Thyroid gland (tissue), 4 donors: ENCODE measurements at regions of chr17 and their contacts with region 1.

Region 1: DNA sequence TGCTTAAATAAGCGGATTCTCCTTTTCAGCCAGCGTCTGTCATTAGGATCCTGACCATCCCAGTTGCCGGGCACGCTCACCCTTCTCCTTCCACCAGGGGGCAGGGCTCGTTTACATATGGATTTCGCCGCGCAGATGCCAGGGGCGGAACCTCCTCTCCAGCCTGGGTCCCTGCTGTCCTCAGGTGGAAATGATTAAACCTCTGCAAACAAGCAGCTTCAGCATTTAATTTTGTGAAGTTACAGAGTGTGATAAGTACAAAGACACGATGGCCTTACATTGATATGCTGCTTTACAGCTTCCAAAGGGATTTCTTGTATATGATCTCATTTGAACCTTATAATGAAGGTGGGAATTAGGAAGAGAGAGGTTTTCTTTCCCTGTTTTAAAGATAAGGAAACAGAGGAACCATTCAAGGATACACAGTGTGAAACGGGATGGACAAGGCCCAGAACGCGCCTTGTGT is 3.9 kb upstream of the KRT28 start:
- DNase-seq: peak; percentile 74 to 75
- H3K4me3 ChIP-seq: no peak overlapping the region
- H3K27ac ChIP-seq: no peak overlapping the region
- H3K4me1 ChIP-seq: no peaks in the 10 kb centered on the region
- H3K27me3 ChIP-seq: peaks cover 5% of the 10 kb centered on the region
- CTCF ChIP-seq: peak; percentile 38 to 81 (median 64)
- POLR2A ChIP-seq: no peak

Region 2: DNA sequence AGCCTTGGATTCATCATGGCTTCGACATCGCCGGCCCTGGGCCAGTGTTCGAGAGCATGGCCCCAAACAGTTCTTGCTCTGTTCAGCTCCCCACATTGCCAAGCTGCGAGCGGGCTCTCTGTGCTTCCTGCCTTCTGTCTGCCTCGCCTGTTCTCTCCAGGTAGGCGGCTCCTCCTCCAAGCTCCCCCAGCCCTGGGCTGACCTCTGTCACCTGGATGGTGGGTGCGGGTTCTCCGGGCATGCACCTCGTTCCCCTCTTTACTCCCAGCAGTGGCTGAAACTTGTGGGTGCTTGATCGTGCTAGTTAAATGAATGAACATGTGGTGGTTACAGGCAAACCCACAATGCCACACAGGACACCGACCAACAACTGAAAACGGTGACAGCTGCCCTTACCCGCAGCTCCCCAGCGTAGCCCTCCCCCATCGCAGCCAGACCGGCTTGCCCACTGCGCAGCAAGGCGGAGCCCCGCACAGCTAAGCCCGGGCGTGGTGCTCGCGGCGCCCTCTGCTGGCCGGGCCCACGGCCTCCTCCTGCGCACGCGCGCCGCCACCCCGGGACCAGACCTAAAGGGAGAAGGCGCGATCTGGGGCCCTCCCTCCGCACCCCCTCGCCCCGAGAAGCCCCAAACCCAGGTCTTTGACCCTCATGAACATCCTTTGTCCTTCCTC is 862.1 kb after region 1 on chr17:
- intact Hi-C with region 1: loop called (anchors 5 kb)
- DNase-seq: peak; percentile 91 to 92
- H3K4me3 ChIP-seq: peak overlapping the region in 2 of 3 donors; percentile 28 to 35
- H3K27ac ChIP-seq: peak overlapping the region; percentile 60 to 88 (median 77)
- H3K4me1 ChIP-seq: peaks cover 12 to 21% of the 10 kb centered on the region in 2 donors
- H3K27me3 ChIP-seq: no peaks in the 10 kb centered on the region
- CTCF ChIP-seq: peak; percentile 73 to 98 (median 92)
- POLR2A ChIP-seq: peak in 1 of 2 donors; percentile 76